Activated CD4-positive, alpha-beta memory T cell treated with anti-CD3 and anti-CD28 coated beads for 36 hours (primary cell): ENCODE measurements at regions of chr1 and their contacts with region 1.

Region 1: DNA sequence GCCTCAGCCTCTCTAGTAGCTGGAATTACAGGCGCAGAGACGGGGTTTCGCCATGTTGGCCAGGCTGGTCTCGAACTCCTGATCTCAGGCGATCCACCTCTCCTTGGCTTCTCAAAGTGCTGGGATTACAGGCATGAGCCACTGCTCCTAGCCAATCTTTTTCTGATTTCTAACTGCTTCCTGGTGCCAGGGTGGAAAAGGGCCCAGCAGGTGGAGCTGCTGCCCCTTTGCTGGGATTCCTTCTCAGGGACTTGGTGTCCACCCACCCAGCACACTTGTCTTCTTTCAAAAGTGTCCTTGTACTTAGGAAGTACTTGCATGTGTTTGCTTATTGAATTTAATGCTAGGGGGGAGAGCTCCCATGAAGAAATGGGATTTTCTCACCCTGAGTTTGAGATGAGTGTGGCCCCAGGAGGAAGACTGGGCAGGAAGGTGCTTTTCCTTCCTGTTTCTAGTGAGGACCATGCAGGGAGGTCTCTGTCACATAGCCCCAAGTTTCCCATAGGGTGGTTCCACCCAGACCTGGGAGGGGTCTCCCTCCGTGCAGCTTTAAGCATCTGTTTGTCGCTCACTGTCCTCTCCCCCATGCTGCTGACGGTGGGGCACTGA is 14.2 kb downstream of the UTP11 start:
- DNase-seq: peak; percentile 79
- H3K4me3 Mint-ChIP-seq: no peak overlapping the region
- H3K27ac Mint-ChIP-seq: no peak overlapping the region
- H3K4me1 Mint-ChIP-seq: peaks cover 50% of the 10 kb centered on the region
- H3K27me3 Mint-ChIP-seq: no peaks in the 10 kb centered on the region

Region 2: DNA sequence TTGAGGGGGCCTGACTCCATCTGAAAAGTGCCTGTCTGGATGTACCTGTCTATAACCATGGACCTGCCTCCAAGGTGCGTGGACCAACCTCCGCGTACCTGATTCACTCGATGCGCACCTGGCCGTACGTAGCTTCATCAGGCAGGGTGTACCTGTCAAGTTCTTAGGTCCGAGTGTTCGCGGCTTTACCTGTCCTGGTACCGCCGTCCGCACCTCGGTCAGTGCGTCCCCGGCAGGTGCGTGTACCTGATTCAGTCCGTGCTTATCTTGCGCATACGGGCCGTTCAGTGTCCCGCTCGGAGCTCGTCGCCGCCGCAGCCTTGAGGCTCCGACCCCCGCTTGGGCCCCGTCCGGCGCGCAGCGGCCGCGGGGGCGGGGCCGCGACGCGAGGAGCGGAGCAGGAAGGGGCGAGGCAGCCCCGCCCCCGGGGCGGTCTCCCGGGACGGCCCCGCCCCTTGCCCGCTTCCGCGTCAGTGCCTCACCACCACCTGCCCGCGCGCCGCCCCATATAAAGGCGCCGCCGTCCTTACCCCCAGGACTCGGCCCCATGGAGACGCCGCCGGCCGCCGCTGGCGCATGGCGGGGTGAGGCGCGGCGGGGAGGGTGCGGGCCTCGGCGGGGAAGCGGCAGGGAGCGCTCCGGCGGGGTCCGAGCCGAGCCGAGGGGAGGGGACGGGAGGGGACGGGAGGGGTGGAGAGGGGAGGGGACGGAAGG is 552.5 kb before region 1 on chr1 and contains the start of gene ZC3H12A:
- CTCF ChIA-PET with region 1: no interaction called
- POLR2A ChIA-PET with region 1: no interaction called
- intact Hi-C with region 1: no loop called
- DNase-seq: peak; percentile 93
- H3K4me3 Mint-ChIP-seq: peak within 1 kb of the TSS; percentile 94
- H3K27ac Mint-ChIP-seq: peak within 1 kb of the TSS; percentile 100
- H3K4me1 Mint-ChIP-seq: peaks cover 37% of the 10 kb centered on the region
- H3K27me3 Mint-ChIP-seq: no peaks in the 10 kb centered on the region
- total RNA-seq, gene ZC3H12A: 39.0 to 40.8 TPM

Region 3: GRCh38 chr1:38012363-38013226 is 14.1 kb before region 1 on chr1 and contains the start of gene UTP11:
- CTCF ChIA-PET with region 1: interaction called, 69 read pairs
- POLR2A ChIA-PET with region 1: interaction called, 20 read pairs
- intact Hi-C with region 1: loop called (anchors 1 kb)
- DNase-seq: peak; percentile 95
- H3K4me3 Mint-ChIP-seq: peak within 1 kb of the TSS; percentile 98
- H3K27ac Mint-ChIP-seq: peak within 1 kb of the TSS; percentile 95
- H3K4me1 Mint-ChIP-seq: peaks cover 58% of the 10 kb centered on the region
- H3K27me3 Mint-ChIP-seq: no peaks in the 10 kb centered on the region
- total RNA-seq, gene UTP11: 51.2 to 52.3 TPM

Region 4: DNA sequence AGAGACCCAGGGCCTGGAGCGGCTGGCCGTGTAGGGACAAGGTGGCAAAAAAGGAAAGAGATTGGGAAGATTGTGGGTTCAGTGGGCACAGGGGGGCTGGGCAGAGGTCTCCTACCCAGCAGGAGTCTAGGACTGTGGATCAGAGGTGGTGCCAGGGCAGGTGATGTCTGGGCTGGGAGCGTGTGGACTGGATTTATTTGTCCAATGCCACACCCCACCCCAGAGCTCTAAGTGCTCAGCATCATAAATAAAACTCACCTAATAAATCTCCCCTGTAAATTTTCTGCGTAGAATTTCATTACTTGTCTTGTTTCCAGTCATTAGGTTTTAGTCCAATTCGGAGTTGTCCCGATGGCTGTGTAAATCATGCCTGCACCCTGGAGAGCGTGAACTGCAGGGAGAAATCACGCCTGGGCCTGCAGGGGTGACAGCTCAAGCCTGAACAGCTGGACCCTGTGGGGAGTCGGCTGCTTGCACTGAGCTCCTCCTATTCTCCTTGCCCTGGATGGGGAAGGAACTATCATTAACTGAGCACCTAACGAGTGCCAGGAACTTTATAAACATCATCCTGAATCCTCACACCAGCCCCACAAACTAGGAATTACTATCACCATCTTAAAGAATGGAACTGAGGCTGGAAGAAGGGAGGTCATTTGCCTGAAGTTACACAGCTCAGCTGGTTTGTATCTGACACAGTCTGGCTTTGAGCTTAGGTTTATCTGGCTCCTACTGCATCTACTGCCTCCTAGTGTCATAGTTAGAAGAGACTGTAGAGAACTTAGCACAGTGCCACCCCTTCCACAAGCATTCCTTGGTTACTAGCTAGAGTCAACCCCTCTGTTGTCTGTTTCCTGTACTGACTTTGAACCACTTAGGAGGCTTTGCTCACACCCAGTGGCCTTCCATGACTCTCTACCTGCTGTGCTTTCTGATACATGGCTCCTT is 44.9 kb after region 1 on chr1:
- CTCF ChIA-PET with region 1: interaction called, 101 read pairs
- POLR2A ChIA-PET with region 1: interaction called, 5 read pairs
- intact Hi-C with region 1: loop called (anchors 1 kb)
- DNase-seq: no peak
- H3K4me3 Mint-ChIP-seq: no peak overlapping the region
- H3K27ac Mint-ChIP-seq: no peak overlapping the region
- H3K4me1 Mint-ChIP-seq: no peaks in the 10 kb centered on the region
- H3K27me3 Mint-ChIP-seq: peaks cover 26% of the 10 kb centered on the region

Region 5: DNA sequence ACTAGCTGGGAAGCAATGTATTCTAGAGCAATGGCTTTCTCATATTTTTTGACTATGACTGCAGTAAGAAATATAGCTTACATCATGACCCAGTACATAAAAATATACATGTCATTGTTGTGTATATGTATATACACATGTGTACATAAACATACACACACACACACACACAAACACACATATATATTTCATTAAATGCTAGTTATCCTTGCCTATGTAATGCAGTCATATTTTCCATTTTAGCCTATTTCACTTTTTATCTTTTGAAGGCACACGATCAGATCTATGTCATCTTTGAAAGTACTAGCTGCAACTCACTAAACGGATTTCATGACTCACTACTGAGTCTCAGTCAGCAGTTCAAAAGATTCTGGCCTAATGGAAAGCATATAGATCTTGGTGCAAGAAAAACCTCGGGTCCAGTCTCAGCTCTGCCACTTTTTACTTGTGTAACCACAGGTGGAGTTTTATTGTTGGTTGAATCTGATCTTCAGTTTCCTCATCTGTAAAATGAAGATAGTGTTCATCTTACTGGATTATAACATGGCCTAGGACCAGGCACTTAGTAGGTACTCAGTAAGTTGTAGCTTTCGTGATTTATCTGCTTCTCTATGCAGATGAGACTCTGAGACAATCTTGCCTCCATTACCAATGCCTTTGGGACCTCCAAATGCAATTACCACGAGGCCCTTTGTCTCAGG is 507.2 kb after region 1 on chr1:
- CTCF ChIA-PET with region 1: no interaction called
- POLR2A ChIA-PET with region 1: no interaction called
- intact Hi-C with region 1: loop called (anchors 1 kb)
- DNase-seq: peak; percentile 31
- H3K4me3 Mint-ChIP-seq: no peak overlapping the region
- H3K27ac Mint-ChIP-seq: peak overlapping the region; percentile 49
- H3K4me1 Mint-ChIP-seq: peaks cover 13% of the 10 kb centered on the region
- H3K27me3 Mint-ChIP-seq: peaks cover 2% of the 10 kb centered on the region

Region 6: GRCh38 chr1:38586993-38587646 is 560.4 kb after region 1 on chr1:
- CTCF ChIA-PET with region 1: interaction called, 4 read pairs
- POLR2A ChIA-PET with region 1: no interaction called
- intact Hi-C with region 1: loop called (anchors 5 kb)
- DNase-seq: peak; percentile 68
- H3K4me3 Mint-ChIP-seq: no peak overlapping the region
- H3K27ac Mint-ChIP-seq: no peak overlapping the region
- H3K4me1 Mint-ChIP-seq: peaks cover 4% of the 10 kb centered on the region
- H3K27me3 Mint-ChIP-seq: peaks cover 3% of the 10 kb centered on the region

Region 7: GRCh38 chr1:38834937-38835827 is 808.5 kb after region 1 on chr1:
- CTCF ChIA-PET with region 1: interaction called, 11 read pairs
- POLR2A ChIA-PET with region 1: no interaction called
- intact Hi-C with region 1: loop called (anchors 5 kb)
- DNase-seq: peak; percentile 40
- H3K4me3 Mint-ChIP-seq: no peak overlapping the region
- H3K27ac Mint-ChIP-seq: no peak overlapping the region
- H3K4me1 Mint-ChIP-seq: no peaks in the 10 kb centered on the region
- H3K27me3 Mint-ChIP-seq: peaks cover 7% of the 10 kb centered on the region

Region 8: DNA sequence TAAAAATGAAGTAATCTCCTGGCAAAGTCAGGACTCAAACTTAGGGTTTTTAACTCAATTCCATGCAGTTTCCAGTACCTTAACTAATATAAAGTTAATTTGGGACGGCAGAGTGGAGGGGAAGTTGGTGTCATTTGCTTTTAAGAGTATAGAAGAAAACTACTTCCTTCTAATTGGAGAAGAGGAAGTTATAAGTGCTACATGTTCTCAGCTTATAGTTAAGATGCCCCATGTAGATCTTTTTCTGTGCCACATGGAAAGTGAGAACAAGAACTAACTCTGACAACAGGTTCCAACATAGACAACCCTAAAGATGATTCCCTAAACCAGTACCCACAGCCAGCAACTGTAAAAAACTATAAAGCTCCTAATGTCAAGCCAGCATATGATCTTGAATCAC is 821.4 kb after region 1 on chr1:
- CTCF ChIA-PET with region 1: no interaction called
- POLR2A ChIA-PET with region 1: interaction called, 4 read pairs
- intact Hi-C with region 1: loop called (anchors 1 kb)
- DNase-seq: no peak
- H3K4me3 Mint-ChIP-seq: no peak overlapping the region
- H3K27ac Mint-ChIP-seq: no peak overlapping the region
- H3K4me1 Mint-ChIP-seq: peaks cover 31% of the 10 kb centered on the region
- H3K27me3 Mint-ChIP-seq: no peaks in the 10 kb centered on the region